ENCODE measurements at regions of chr3 and their contacts with region 1.

Region 1: GRCh38 chr3:129031476-129032225 is 28.9 kb upstream of the GP9 start:
- DNase-seq: peak; percentile 42

Region 2: GRCh38 chr3:128993461-128994173 is 38.0 kb before region 1 on chr3 and contains the start of gene CFAP92:
- intact Hi-C with region 1: no loop called
- DNase-seq: peak; percentile 96
- total RNA-seq, gene CFAP92: 0.14 to 0.28 TPM

Region 3: GRCh38 chr3:129256270-129256669 is 224.6 kb after region 1 on chr3:
- intact Hi-C with region 1: loop called in 1 of 2 experiments (anchors 1 kb)
- DNase-seq: no peak